ENCODE measurements at regions of chr16 and their contacts with region 1.

Region 1: DNA sequence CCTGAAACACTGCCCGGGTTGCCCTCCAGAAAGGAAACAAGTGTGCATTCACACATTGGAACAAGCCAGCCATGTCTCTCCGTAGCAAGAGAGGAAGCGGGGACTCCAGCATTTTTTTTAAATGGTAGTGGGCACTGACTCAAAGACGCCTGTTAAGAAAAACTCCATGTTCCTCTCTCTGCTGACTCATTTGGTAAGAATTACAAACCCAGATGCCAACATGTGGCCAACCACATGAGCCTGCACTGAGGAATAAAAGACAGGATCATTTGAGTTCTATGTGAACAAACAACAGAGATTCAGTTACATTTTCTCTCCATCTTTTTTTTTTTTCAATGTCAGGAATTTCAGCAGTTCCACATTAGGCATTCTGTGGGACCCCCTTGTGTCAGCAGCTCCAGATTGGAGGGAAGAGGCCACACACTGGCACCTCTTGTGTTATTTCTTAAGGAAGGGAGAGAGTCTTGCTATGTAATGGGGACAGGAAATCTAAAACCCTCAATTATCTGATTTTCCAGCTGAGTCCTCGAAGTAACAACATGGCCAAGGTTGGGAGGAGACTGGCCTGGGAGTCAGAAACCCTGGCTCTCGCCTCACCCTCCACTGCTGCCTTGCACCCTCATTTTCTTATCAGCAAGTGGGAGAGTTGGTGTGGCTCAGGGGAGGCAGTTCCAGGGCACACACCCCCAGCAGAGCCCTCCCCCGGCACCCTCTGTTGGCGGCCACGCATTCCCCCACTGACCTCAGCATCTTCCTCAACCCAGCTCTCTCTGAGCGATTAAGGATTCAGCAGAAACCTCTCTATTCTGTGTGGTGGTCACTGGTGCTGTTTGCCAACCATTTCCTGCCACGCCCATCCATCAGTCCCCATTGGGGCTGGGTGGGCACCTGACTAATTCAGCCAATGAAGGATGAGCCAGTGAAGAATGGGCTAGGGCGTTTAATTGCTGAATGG is 173.0 kb downstream of the FOXL1 start:
- DNase-seq: no peak
- H3K4me3 ChIP-seq: no peak overlapping the region
- H3K27ac ChIP-seq: peak overlapping the region; percentile 14 to 42 (median 30)
- H3K4me1 ChIP-seq: peaks cover 0 to 7% (median 0%) of the 10 kb centered on the region in 4 donors
- H3K27me3 ChIP-seq: peaks cover 0 to 14% (median 0%) of the 10 kb centered on the region in 3 donors
- CTCF ChIP-seq: no peak
- EP300 ChIP-seq: no peak
- POLR2A ChIP-seq: no peak

Region 2: GRCh38 chr16:86575754-86576557 is 175.4 kb before region 1 on chr16:
- intact Hi-C with region 1: loop called (anchors 10 kb)
- DNase-seq: no peak
- H3K4me3 ChIP-seq: peak overlapping the region in 3 of 4 donors; percentile 26 to 35 (median 33)
- H3K27ac ChIP-seq: peak overlapping the region in 2 of 4 donors; percentile 2 to 58
- H3K4me1 ChIP-seq: peaks cover 0 to 31% (median 20%) of the 10 kb centered on the region in 4 donors
- H3K27me3 ChIP-seq: peaks cover 49 to 100% (median 83%) of the 10 kb centered on the region in 3 donors
- CTCF ChIP-seq: peak in 2 of 4 experiments; percentile 19 to 22
- EP300 ChIP-seq: no peak
- POLR2A ChIP-seq: no peak

Region 3: GRCh38 chr16:86685076-86685475 is 66.3 kb before region 1 on chr16:
- intact Hi-C with region 1: no loop called
- DNase-seq: no peak
- H3K4me3 ChIP-seq: no peak overlapping the region
- H3K27ac ChIP-seq: no peak overlapping the region
- H3K4me1 ChIP-seq: no peaks in the 10 kb centered on the region
- H3K27me3 ChIP-seq: peaks cover 5 to 39% (median 5%) of the 10 kb centered on the region in 3 donors
- CTCF ChIP-seq: no peak
- EP300 ChIP-seq: no peak
- POLR2A ChIP-seq: no peak